ENCODE measurements at regions of chr5 and their contacts with region 1.

Region 1: DNA sequence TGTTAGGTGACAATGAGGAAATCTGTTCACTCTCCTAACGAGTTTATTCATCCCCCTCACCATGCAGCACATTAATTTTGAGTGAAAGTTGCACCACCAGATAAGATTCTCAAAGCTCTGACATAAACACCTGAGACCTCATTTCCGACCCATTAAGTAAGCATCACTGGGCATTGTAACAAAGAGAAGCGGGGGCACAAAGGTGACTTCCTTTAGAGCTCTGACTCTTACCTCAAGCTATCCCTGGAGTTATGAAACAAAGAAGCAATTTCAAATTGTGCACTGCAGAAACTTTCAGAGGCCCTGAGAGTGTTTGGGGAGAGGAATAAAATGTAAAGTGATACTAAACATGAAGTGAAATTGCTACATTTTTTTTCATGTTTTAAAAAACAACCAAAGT is 29.5 kb downstream of the C5orf15 start:
- DNase-seq: no peak
- H3K4me3 ChIP-seq: no peak overlapping the region
- H3K27ac ChIP-seq: no peak overlapping the region
- H3K4me1 ChIP-seq: no peaks in the 10 kb centered on the region; a peak in 1 of 7 replicates
- H3K27me3 ChIP-seq: no peaks in the 10 kb centered on the region
- CTCF ChIP-seq: no peak
- EP300 ChIP-seq: no peak
- POLR2A ChIP-seq: no peak
- RAD21 ChIP-seq: no peak

Region 2: DNA sequence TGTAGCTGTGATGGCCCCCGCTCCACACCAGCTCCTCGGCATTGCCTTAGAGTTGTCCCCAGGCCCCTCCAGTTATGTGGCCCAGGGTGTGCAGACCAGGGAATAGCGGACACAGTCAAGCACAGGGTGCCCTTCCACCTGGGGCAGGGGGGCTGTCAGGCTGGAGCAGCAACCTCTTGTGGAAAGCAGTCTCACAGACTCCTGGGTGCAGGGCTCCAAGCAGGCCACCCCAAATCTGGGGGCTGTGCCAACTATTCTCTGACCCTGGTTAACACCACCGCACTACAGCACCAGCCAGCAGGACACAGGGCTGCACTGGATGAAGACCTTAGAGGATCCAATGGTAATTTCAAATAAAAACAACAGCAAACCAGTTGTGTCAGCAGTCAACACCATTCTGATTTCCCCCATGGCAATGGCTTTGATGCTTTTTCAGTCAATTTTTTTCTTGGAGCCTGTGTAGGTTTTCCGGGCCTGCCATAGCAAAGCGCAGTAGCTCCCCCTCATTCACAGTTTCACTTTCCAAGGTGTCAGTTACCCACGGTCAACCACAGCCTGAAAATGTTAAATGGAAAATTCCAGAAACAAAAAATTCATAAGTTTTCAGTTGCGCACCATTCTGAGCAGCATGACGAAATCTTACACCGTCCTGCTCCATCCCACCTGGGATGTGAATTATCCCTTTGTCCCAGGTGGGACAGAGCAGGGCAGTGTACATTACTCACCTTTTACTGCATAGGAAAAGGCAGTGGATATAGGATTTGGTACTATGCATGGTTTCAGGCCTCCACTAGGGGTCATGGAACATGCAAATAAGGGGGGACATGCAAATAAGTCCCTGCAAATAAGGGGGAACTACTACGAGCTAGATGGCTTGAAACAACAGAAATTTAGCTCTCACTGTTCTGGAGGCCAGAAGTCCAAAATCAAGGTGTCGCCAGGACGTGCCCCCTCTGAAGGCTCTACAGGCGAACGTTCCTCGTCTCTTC is 19.5 kb before region 1 on chr5:
- CTCF ChIA-PET with region 1: interaction called, 11 read pairs
- POLR2A ChIA-PET with region 1: no interaction called
- DNase-seq: no peak
- H3K4me3 ChIP-seq: no peak overlapping the region
- H3K27ac ChIP-seq: no peak overlapping the region
- H3K4me1 ChIP-seq: no peaks in the 10 kb centered on the region; a peak in 1 of 7 replicates
- H3K27me3 ChIP-seq: no peaks in the 10 kb centered on the region
- CTCF ChIP-seq: no peak
- EP300 ChIP-seq: no peak
- POLR2A ChIP-seq: no peak
- RAD21 ChIP-seq: no peak

Region 3: DNA sequence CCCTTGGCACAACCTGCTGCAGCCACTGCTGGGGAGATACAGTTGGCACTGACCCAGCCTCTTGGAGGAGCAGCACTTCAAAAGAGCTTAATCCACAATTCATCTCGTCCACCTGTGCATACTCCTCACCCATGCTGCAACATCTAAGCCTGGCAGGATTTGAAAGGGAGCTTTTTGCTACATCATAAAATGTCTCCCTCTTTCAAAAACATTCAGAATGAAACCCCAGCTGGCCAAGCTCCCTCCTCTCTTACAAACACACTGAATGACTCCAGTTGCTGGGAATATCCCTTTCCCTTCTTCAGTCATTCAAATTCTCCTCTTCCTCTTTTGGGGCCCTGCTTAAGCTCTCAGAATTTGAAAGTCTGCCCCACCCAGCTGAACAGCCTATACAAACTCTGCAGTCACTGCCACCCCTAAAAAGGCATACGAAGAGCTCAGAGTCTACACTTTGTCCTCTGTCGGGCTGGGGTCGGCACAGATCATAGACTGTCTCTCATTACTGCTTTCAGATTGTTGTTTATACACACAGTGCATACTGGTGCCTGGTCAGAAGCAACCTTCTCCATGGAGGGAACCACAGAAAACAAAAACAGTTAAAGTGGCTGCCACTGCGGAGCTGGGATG is 38.3 kb after region 1 on chr5:
- CTCF ChIA-PET with region 1: no interaction called
- POLR2A ChIA-PET with region 1: no interaction called
- DNase-seq: no peak
- H3K4me3 ChIP-seq: no peak overlapping the region
- H3K27ac ChIP-seq: no peak overlapping the region
- H3K4me1 ChIP-seq: no peaks in the 10 kb centered on the region
- H3K27me3 ChIP-seq: no peaks in the 10 kb centered on the region
- CTCF ChIP-seq: no peak
- EP300 ChIP-seq: no peak
- POLR2A ChIP-seq: no peak
- RAD21 ChIP-seq: no peak